ENCODE measurements at regions of chr1 and their contacts with region 1.

Region 1: GRCh38 chr1:205668951-205669340 is 11.4 kb downstream of the SLC45A3 start:
- DNase-seq: no peak
- H3K4me3 ChIP-seq: no peak overlapping the region
- H3K27ac ChIP-seq: no peak overlapping the region
- H3K4me1 ChIP-seq: peaks cover 0 to 7% of the 10 kb centered on the region in 2 donors
- H3K27me3 ChIP-seq: no peaks in the 10 kb centered on the region
- CTCF ChIP-seq: no peak
- POLR2A ChIP-seq: no peak

Region 2: DNA sequence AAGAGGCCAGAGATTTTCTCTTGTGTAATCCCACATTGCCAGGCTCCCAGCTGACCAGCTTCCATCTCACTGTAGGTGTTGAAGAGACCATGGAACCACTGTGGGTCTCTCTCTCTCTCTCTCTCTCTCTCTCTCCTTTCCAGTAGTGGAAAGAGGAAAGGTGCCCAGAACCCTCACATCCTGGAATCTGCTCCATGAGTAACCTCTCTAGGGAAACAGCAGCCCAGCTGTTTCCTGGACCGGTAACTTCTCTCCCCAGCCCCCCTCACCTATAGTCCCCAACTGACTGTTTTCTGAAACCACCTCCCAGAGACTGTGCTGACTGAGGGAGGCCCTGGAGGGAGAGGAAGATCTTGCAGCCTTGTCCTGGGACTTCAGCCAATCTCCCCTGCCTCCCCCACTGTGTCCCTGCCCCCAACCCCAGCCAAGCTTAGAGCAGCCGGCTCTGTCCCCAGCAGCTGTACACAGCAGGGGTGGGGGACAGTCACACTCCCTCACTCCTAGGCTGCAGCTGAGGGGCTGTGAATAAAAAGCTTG is 32.0 kb after region 1 on chr1:
- intact Hi-C with region 1: loop called (anchors 5 kb)
- DNase-seq: peak; percentile 18 to 22
- H3K4me3 ChIP-seq: no peak overlapping the region
- H3K27ac ChIP-seq: no peak overlapping the region
- H3K4me1 ChIP-seq: no peaks in the 10 kb centered on the region
- H3K27me3 ChIP-seq: no peaks in the 10 kb centered on the region
- CTCF ChIP-seq: no peak
- POLR2A ChIP-seq: no peak

Region 3: DNA sequence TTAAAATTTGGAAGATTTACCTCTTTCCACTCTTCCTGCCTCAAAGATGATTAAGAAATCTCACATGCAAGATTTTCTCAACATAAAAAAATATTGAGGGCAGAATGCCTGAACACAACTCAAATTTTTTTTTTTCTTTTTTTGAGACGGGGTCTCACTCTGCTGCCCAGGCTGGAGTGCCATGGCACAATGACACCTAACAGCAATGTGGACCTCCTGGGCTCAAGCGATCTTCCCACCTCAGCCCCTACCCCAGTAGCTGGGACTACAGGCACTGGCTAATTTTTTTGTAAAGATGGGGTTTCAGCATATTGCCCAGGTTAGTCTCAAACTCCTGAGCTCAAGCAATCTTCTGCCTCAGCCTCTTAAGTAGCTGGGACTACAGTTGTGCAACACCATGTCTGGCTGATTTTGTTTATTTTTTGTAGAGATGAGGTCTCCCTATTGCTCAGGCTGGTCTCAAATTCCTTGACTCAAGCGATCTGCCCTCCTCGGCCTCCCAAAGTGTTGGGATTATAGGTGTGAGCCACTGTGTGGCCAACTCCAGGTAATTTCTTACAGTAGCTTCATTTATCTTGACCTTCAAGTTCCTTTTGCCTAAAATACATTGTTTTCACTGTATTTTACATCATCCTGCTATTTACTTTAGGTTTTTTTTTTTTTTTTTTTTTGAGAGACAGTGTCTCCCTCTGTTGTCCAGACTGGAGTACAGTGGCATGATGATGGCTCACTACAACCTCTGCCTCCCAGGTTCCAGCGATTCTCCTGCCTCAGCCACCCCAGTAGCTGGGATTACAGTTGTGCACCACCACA is 70.6 kb after region 1 on chr1:
- intact Hi-C with region 1: no loop called
- DNase-seq: peak in 1 of 2 donors; percentile 14
- H3K4me3 ChIP-seq: no peak overlapping the region
- H3K27ac ChIP-seq: no peak overlapping the region
- H3K4me1 ChIP-seq: peaks cover 15% of the 10 kb centered on the region in 2 donors
- H3K27me3 ChIP-seq: no peaks in the 10 kb centered on the region
- CTCF ChIP-seq: no peak
- POLR2A ChIP-seq: no peak

Region 4: DNA sequence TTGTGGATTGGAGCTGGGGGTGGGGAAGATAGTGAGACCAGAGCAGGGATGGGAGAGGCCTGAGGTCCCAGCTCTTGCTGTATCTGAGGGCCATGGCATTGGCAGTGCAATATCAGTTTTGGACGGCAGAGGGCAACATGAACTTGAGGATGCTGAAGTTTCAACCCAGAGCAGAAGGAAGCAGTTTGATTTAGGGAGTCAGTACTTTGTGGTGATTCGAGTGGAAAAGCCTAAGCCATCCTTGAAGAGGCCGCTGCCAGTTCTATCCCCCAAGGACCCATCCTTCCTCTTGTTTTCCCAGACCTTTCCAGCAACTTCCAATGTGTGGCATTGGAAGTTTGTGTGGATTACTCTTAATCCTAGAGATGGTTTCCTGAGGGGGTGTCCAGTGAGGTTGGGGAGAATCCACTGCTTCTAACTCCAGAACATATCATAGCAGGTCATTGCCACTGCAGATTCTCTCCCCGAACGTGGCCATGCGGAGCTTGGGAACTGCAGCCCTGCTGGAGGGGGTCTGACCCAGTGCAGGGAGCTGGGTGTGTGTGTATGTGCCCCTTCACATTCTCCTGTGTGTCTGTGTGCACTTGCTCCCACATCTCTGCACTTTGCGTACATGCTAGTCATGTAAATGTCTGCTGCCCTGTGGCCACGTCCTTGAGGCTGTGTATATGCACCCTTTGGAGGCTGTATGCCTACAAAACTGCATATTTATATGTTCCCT is 250.2 kb after region 1 on chr1:
- intact Hi-C with region 1: loop called (anchors 10 kb)
- DNase-seq: peak; percentile 87 to 91
- H3K4me3 ChIP-seq: no peak overlapping the region
- H3K27ac ChIP-seq: peak overlapping the region; percentile 41 to 89 (median 83)
- H3K4me1 ChIP-seq: peaks cover 44 to 55% of the 10 kb centered on the region in 2 donors
- H3K27me3 ChIP-seq: no peaks in the 10 kb centered on the region
- CTCF ChIP-seq: peak; percentile 80 to 99 (median 94)
- POLR2A ChIP-seq: peak in 1 of 2 donors; percentile 8